HepG2 (cell line): ENCODE measurements at regions of chr1 and their contacts with region 1.

Region 1: DNA sequence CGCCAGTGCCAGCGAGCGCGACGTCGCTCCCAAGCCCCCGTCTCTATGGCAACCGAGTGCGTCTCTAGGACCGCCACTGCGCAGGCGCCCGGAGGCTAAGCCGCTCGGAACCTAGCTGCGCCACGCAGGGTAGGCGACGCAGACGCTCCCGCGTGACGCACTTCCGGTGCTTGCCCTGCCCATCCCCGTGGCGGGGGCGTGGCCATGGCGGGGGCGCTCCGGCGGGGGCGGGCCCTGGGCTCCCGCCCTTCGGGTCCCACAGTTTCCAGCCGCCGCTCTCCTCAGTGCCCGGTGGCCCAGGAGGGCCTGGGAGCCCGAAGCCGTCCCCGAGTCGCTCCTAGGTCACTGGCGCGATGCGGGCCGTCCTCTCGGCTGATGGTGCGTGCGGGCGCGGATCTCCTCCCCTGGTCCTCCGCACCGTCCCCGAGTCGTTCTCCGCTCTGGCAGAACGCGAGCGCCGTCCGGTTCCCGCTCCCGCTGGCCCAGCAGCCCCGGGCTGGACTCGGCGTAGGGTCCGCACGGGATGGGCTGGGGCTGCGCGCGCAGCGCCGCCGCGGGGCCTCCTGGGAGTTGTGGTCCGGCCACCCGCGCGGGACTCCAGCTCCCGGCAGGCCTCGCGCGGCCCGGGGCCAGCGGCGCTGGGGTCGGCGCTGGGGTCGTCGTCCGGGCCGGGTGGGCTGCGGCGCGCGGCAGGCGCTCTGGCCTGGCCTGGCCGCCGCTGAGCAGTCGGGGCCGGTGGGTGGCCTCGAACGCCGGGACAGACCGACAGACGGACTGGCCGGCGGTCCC is at the start of gene MIB2:
- DNase-seq: peak; percentile 94
- ATAC-seq: peak; percentile 85
- H3K4me3 ChIP-seq: peak within 1 kb of the TSS; percentile 90 to 100 (median 98)
- H3K27ac ChIP-seq: peak within 1 kb of the TSS; percentile 99
- H3K4me1 ChIP-seq: peaks cover 44% of the 10 kb centered on the region
- H3K27me3 ChIP-seq: no peaks in the 10 kb centered on the region; a peak in 2 of 5 replicates
- CTCF ChIP-seq: 0 out of 2 replicates have a peak, but pooled peaks have one; percentile 10
- EP300 ChIP-seq: no peak
- POLR2A ChIP-seq: peak in 1 of 2 experiments; percentile 85; a peak in 2 of 4 replicates
- RAD21 ChIP-seq: peak; percentile 53
- total RNA-seq, gene MIB2: 10.3 and 30.4 TPM in 2 replicates

Region 2: DNA sequence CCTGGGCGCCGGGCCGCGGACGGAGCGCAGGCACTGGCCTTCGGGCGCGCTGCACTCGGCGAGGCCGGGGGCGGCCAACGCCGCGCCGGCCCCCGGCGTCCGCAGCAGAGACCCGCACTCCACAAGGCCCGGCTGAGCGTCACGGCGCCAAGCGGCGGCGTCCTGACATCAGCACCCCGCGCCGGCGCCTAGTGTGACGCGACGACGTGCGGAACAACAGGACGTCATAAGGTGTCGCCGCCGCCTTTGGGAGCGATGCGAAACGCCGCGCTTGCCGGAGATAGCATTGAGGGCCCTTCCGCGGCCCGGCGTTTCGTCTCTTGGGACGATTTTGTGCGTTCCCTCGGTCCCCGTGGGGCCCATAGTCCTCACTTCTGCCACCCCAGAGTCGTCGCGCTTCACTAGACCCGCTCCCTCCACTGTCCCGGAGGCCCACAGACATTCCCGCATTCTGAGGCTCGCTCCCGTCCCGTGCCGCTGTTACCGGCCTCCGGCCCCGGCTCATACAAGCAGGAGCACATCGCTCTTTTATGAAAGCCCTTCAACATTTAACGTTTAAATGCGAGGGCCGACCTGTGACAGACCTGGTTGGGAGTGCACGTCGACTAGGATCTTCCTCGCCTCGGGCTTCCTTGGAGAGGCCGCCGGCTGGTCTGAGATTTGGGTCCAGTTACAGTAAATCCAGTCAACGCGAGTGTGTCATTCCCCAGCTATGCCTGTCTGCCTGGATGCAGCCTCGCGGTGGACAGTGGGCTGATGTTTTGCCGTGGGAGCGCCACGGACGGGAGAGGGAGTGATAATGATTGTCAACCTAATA is 40.5 kb before region 1 on chr1 and contains the start of gene SSU72:
- CTCF ChIA-PET with region 1: no interaction called
- POLR2A ChIA-PET with region 1: interaction called, 29 read pairs
- in situ Hi-C with region 1: loop called (anchors 5 kb)
- intact Hi-C with region 1: loop called (anchors 5 kb)
- DNase-seq: peak; percentile 76
- ATAC-seq: peak; percentile 58
- H3K4me3 ChIP-seq: peak within 1 kb of the TSS; percentile 86 to 99 (median 99)
- H3K27ac ChIP-seq: peak within 1 kb of the TSS; percentile 87
- H3K4me1 ChIP-seq: peaks cover 56% of the 10 kb centered on the region
- H3K27me3 ChIP-seq: peaks cover 0 to 13% of the 10 kb centered on the region in 2 experiments; a peak in 1 of 5 replicates
- CTCF ChIP-seq: 0 out of 2 replicates have a peak, but pooled peaks have one; percentile 19
- EP300 ChIP-seq: peak in 1 of 2 experiments; percentile 42; a peak in 1 of 4 replicates
- POLR2A ChIP-seq: peak; percentile 70 to 76
- RAD21 ChIP-seq: peak; percentile 23
- total RNA-seq, gene SSU72: 63.5 and 67.1 TPM in 2 replicates

Region 3: DNA sequence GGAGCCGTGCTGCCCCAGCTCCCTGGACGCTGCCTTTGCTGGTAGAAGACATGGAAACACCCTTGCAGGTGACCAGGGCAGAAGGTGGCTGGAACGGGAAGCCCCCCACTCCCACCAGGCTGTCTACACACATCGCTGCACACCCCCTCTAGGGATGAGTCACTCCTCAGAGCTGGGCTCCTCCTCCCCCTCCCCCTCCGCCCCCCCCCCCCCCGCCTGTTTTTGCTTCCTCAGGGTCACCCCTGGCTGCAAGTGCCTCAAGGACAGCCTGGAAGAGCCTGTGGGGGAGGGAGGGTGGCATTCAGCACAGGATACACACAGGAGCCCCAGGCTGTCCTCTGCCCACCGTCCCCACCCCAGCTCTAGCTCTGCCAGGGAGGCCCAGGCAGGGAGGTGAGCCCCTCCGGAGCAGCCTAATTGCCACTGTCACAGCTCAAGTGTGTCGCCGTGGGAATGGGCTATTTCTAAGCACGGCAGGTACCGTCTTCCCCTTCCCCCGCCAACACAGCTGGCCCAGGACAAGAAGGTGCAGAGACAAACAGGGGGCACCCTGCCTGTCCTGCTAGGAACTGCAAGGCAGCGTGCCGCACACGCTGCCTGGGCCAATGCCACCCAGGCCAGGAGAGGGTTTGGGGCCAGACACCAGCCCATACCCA is 18.0 kb before region 1 on chr1:
- CTCF ChIA-PET with region 1: no interaction called
- POLR2A ChIA-PET with region 1: interaction called, 17 read pairs
- in situ Hi-C with region 1: no loop called
- intact Hi-C with region 1: no loop called
- DNase-seq: no peak
- ATAC-seq: peak; percentile 71
- H3K4me3 ChIP-seq: peak overlapping the region in 2 of 3 experiments; percentile 29 to 64; a peak in 4 of 6 replicates
- H3K27ac ChIP-seq: no peak overlapping the region
- H3K4me1 ChIP-seq: peaks cover 43% of the 10 kb centered on the region
- H3K27me3 ChIP-seq: peaks cover 10 to 41% of the 10 kb centered on the region in 2 experiments
- CTCF ChIP-seq: peak; percentile 54
- EP300 ChIP-seq: no peak
- POLR2A ChIP-seq: no peak
- RAD21 ChIP-seq: peak; percentile 59

Region 4: GRCh38 chr1:1602968-1603506 is 12.4 kb before region 1 on chr1:
- CTCF ChIA-PET with region 1: no interaction called
- POLR2A ChIA-PET with region 1: interaction called, 17 read pairs
- in situ Hi-C with region 1: no loop called
- intact Hi-C with region 1: no loop called
- DNase-seq: no peak
- ATAC-seq: peak; percentile 16; the same call in 2 of the 3 replicates
- H3K4me3 ChIP-seq: no peak overlapping the region
- H3K27ac ChIP-seq: no peak overlapping the region
- H3K4me1 ChIP-seq: peaks cover 41% of the 10 kb centered on the region
- H3K27me3 ChIP-seq: peaks cover 1 to 9% of the 10 kb centered on the region in 2 experiments; a peak in 2 of 5 replicates
- CTCF ChIP-seq: no peak
- EP300 ChIP-seq: no peak
- POLR2A ChIP-seq: no peak
- RAD21 ChIP-seq: no peak

Region 5: GRCh38 chr1:1669468-1670440 is 54.3 kb after region 1 on chr1:
- CTCF ChIA-PET with region 1: no interaction called
- POLR2A ChIA-PET with region 1: no interaction called
- in situ Hi-C with region 1: no loop called
- intact Hi-C with region 1: no loop called
- DNase-seq: no peak
- ATAC-seq: no peak
- H3K4me3 ChIP-seq: no peak overlapping the region
- H3K27ac ChIP-seq: no peak overlapping the region
- H3K4me1 ChIP-seq: no peaks in the 10 kb centered on the region
- H3K27me3 ChIP-seq: no peaks in the 10 kb centered on the region
- CTCF ChIP-seq: no peak
- EP300 ChIP-seq: no peak
- POLR2A ChIP-seq: no peak
- RAD21 ChIP-seq: no peak

Region 6: GRCh38 chr1:1721201-1721600 is 105.8 kb after region 1 on chr1:
- CTCF ChIA-PET with region 1: no interaction called
- POLR2A ChIA-PET with region 1: no interaction called
- in situ Hi-C with region 1: no loop called
- intact Hi-C with region 1: no loop called
- DNase-seq: no peak
- ATAC-seq: no peak
- H3K4me3 ChIP-seq: no peak overlapping the region
- H3K27ac ChIP-seq: no peak overlapping the region
- H3K4me1 ChIP-seq: no peaks in the 10 kb centered on the region
- H3K27me3 ChIP-seq: no peaks in the 10 kb centered on the region
- CTCF ChIP-seq: no peak
- EP300 ChIP-seq: no peak
- POLR2A ChIP-seq: no peak
- RAD21 ChIP-seq: no peak